ENCODE measurements at regions of chr6 and their contacts with region 1.

Region 1: DNA sequence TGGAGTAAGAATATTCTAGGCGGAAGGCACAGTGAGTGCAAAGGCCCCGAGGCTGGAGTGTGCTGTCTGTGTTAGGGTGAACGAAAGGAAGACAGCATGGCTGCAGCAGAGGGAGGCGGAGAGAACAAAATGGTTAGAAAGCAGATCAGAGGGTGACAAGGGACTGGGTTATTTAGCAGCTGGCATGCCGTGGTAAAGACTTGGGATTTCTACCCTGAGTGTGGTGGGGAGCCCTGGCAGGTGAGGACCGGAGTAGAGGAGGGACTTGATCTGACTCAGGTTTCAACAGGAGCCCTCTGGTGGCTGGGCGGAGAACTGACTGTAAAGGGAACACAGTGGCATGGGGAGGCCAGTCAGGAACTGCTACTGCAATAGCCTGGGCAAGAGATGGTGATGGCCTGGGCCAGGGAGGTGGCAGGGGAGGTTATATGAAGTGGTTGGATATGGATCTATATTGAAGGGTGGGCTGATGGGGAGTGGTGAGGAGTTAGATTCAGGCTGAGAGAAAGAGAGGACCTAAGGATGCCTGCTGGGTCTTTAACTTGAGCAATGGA is 38.0 kb downstream of the PIM1 start:
- DNase-seq: peak; percentile 95
- H3K4me3 Mint-ChIP-seq: peak overlapping the region; percentile 46
- H3K27ac Mint-ChIP-seq: peak overlapping the region; percentile 89
- H3K4me1 Mint-ChIP-seq: peaks cover 73% of the 10 kb centered on the region
- H3K27me3 Mint-ChIP-seq: no peaks in the 10 kb centered on the region

Region 2: GRCh38 chr6:37190159-37190535 is 17.8 kb before region 1 on chr6:
- CTCF ChIA-PET with region 1: interaction called, 31 read pairs
- DNase-seq: peak; percentile 31
- H3K4me3 Mint-ChIP-seq: no peak overlapping the region
- H3K27ac Mint-ChIP-seq: peak overlapping the region; percentile 84
- H3K4me1 Mint-ChIP-seq: peaks cover 80% of the 10 kb centered on the region
- H3K27me3 Mint-ChIP-seq: no peaks in the 10 kb centered on the region

Region 3: GRCh38 chr6:37222125-37222967 is 14.4 kb after region 1 on chr6:
- CTCF ChIA-PET with region 1: interaction called, 18 read pairs
- DNase-seq: peak; percentile 88
- H3K4me3 Mint-ChIP-seq: peak overlapping the region; percentile 76
- H3K27ac Mint-ChIP-seq: peak overlapping the region; percentile 77
- H3K4me1 Mint-ChIP-seq: peaks cover 31% of the 10 kb centered on the region
- H3K27me3 Mint-ChIP-seq: no peaks in the 10 kb centered on the region

Measured in activated naive CD4-positive, alpha-beta T cell treated with anti-CD3 and anti-CD28 coated beads, Interleukin-2, amount 10 ng/mL, durations not matched to agents 7 days and 5 days (primary cell).